Endothelial cell of umbilical vein (primary cell): ENCODE measurements at regions of chr15 and their contacts with region 1.

Region 1: DNA sequence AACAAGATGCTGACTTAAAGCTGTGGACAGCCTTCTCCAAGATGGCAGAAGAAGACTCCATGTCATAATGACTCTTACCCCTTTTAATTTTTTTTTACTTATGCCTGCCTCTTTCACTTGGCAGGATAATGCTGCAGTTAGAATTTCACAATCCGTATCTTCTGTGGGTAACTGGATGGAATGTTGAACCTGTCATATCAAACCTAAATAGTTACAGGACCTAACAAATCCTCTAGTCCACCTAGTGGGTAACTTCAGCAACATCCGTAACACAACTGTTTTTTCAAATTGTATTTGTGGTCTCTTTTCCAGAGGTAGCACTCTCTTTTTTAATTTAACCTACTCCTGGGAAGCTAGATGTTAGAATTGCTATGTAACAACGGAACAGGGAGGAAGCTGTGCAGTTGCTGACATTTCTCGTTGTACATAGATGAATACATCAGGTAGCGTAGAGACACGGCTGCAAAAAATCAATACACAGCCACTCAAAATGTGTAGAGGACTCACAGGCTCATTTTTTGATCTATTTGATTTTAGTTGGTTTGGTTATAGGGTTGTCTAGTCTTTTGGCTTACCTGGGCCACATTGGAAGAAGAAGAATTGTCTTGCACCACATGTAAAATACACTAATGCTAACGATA is 43.9 kb upstream of the TRPM1 start:
- DNase-seq: no peak
- H3K4me3 ChIP-seq: no peak overlapping the region
- H3K27ac ChIP-seq: no peak overlapping the region
- H3K4me1 ChIP-seq: no peaks in the 10 kb centered on the region
- H3K27me3 ChIP-seq: peaks cover 0 to 2% of the 10 kb centered on the region in 2 experiments
- CTCF ChIP-seq: no peak
- POLR2A ChIP-seq: no peak

Region 2: DNA sequence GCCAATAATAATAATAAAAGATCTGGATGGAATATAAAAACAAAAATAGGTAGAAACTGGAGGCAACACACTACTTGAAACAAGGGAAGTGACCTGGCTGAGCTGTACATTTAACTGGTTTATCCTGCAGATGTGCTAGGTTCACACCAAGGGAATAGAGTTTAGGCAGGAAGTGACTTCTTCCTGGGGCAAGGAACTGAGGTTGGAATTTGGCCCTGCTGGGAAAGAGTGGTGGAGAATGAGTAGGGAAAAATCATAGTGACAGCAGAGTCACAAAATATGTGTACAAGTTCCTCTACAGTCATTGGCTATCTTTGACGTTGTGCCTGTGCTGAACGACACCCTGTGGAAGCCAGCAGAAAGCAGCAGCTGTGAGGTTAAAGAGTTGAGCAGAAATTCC is 475.3 kb before region 1 on chr15:
- CTCF ChIA-PET with region 1: no interaction called
- POLR2A ChIA-PET with region 1: no interaction called
- dilution Hi-C with region 1: no loop called
- intact Hi-C with region 1: loop called (anchors 10 kb)
- DNase-seq: peak; percentile 29
- H3K4me3 ChIP-seq: no peak overlapping the region
- H3K27ac ChIP-seq: peak overlapping the region; percentile 46
- H3K4me1 ChIP-seq: peaks cover 15% of the 10 kb centered on the region
- H3K27me3 ChIP-seq: no peaks in the 10 kb centered on the region
- CTCF ChIP-seq: no peak
- POLR2A ChIP-seq: no peak

Region 3: DNA sequence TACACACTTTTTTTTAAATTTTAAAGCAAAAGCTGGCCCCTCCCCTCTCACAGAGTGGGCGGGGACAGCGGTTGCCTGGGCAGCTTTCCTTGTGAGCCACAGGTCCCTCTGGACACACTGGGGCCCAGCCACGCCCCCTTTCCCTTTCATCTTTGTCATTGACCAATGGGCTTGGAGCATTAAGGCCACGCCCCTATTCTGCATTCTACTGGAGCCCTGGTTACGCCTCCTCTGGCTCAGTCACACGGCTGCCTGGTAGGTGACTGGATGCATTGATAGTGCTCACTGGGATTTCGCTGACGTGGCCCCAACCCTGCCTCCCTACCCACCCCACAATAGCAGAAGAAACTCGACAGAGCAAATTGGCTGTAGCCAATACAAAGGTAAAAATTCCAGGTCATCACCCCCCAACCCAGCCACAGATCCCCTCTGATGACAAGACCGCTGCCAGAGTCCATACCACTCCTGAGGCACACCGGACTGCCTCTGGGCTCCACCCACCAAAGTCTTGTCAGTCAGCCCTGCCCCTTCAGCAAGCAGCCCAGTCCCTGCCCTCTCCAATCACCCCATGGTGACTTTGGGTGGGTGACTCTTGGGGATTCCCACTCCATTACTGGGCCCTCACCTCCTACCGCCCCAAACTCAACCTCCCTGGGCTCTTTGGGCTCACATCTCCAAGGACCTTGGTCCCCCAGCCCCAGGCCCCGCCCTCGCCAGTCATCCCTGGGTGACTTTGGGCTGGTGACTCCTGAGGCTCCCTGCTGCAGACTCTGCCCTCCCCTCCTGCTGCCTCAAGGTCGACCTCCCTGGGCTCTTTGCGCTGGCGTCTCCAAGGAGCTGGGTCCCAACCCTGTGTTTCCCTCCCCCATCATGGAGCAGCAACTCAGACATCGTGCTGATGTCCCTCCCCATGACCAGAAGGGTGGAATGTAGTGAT is 353.9 kb before region 1 on chr15:
- CTCF ChIA-PET with region 1: no interaction called
- POLR2A ChIA-PET with region 1: no interaction called
- dilution Hi-C with region 1: no loop called
- intact Hi-C with region 1: loop called (anchors 5 kb)
- DNase-seq: no peak
- H3K4me3 ChIP-seq: no peak overlapping the region
- H3K27ac ChIP-seq: no peak overlapping the region
- H3K4me1 ChIP-seq: no peaks in the 10 kb centered on the region
- H3K27me3 ChIP-seq: peaks cover 1 to 3% of the 10 kb centered on the region in 2 experiments
- CTCF ChIP-seq: no peak
- POLR2A ChIP-seq: no peak

Region 4: GRCh38 chr15:30889196-30889595 is 256.2 kb before region 1 on chr15:
- CTCF ChIA-PET with region 1: no interaction called
- POLR2A ChIA-PET with region 1: no interaction called
- dilution Hi-C with region 1: no loop called
- intact Hi-C with region 1: no loop called
- DNase-seq: no peak
- H3K4me3 ChIP-seq: no peak overlapping the region
- H3K27ac ChIP-seq: no peak overlapping the region
- H3K4me1 ChIP-seq: no peaks in the 10 kb centered on the region
- H3K27me3 ChIP-seq: peaks cover 0 to 3% of the 10 kb centered on the region in 2 experiments
- CTCF ChIP-seq: no peak
- POLR2A ChIP-seq: no peak

Region 5: DNA sequence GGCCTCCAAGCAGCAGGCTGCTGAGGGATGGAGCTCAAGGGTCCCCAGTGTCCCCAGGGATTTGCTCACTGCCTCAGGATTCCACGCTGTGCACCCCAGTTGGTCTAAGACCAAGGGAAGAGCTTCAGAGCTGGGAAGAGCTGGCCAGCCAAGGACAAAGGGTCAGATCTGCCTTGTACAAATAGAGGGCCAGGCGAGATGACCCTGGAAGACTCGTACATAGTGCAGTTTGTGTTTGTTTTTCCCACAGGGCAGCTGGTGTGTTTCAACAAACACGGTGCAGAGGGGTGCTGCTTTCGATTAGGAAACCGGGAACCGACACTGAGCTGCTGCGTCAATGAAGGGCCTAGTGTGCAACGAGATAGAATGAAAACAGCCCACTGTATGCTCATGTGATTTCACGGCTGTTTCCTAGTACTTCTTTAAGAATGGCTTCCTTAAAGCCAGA is 12.3 kb after region 1 on chr15:
- CTCF ChIA-PET with region 1: no interaction called
- POLR2A ChIA-PET with region 1: no interaction called
- dilution Hi-C with region 1: no loop called
- intact Hi-C with region 1: no loop called
- DNase-seq: no peak
- H3K4me3 ChIP-seq: no peak overlapping the region
- H3K27ac ChIP-seq: no peak overlapping the region
- H3K4me1 ChIP-seq: no peaks in the 10 kb centered on the region
- H3K27me3 ChIP-seq: no peaks in the 10 kb centered on the region
- CTCF ChIP-seq: no peak
- POLR2A ChIP-seq: no peak